Left colon (tissue), 2 donors: ENCODE measurements at regions of chr17 and their contacts with region 1.

Region 1: DNA sequence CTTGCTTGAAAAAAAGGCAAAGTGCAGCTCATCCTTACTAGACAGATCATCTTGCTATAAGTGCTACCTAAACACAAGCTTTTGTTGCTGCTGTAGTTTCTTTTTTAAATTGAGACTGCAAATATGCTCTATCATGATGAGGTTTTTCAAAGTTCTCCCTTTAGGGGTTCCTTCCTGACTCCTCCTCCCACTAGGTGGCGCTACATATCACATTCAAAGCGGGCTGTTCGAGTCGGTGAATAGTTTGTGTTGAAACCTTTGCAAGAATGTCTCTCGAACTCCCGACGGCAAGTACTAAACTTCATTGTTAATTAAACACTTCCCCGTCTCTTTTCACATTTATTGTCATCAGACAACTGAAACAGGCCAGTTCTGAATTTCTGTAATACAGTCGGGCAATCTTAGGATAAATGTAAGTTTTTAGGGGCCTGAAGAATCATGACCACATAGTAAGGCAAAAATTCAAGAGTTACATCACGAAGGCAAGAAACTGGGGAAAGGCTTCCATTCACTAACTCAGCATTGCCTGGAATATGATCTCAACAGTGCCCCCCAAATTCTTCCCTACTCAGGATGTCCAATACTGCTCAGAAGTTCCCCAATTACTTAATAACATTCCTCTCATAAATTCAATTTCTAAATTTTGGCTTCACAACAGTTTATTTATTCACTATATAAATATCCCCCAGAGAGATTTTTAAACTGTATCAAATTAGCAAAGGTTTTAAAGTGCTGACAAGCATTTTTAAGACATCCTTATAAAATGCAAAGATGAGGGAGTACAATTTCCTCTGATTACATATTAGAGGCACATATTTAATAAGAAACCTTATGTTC is 6.7 kb downstream of the HS3ST3A1 start:
- DNase-seq: peak; percentile 49 to 74
- ATAC-seq: peak; percentile 64

Region 2: DNA sequence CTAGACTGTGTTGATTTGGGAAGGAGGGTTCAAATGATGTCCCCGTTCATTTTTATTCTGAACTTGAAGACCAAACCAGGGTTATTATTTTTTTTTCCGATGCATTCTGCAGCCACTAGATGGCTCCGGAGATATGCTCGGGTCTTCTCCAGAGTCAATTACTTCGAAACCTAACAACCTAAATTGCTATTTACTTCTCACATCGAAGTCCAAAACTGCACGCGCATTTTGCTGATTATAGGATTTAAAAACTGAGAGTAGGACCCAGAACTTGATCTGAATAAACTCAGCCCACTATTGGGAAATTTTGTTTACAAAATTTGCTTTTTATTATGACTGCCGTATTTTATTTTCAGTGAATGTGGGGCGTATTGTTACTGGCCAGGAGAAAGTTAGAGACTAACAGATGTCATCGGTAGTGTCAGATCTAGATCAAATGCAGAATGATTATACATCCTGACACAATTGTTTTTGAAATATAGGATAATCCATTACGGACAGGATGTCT is 257.1 kb before region 1 on chr17:
- intact Hi-C with region 1: loop called in 1 of 2 experiments (anchors 10 kb)
- DNase-seq: peak in 1 of 2 donors; percentile 15
- ATAC-seq: peak; percentile 66

Region 3: DNA sequence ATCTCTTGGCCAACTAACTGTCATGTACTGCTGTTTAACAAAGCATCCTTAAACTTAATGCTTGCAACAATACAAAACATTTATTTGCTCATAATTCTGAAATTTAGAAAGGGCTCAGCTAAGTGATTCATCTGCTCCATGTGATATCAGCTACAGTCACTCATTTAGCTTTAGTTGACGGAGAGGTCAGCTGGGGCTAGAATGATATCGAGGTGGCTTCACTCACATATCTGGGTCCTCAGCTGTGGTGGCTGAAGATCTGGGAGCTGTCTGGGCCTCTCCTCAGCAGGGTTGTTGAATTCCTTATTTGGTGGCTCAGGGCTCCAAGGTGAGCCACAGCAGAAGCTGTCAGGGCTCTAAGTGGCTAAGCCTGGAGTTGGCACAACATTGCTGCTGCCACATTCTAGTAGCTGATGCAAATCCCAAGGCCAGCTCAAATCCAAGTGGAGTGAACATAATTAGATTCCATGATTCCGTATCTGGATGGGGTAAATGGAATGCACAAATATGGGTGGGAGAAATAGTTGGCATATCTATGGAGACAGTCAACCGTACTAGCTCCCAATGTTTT is 56.1 kb before region 1 on chr17:
- intact Hi-C with region 1: loop called in 1 of 2 experiments (anchors 10 kb)
- DNase-seq: no peak
- ATAC-seq: no peak

Region 4: DNA sequence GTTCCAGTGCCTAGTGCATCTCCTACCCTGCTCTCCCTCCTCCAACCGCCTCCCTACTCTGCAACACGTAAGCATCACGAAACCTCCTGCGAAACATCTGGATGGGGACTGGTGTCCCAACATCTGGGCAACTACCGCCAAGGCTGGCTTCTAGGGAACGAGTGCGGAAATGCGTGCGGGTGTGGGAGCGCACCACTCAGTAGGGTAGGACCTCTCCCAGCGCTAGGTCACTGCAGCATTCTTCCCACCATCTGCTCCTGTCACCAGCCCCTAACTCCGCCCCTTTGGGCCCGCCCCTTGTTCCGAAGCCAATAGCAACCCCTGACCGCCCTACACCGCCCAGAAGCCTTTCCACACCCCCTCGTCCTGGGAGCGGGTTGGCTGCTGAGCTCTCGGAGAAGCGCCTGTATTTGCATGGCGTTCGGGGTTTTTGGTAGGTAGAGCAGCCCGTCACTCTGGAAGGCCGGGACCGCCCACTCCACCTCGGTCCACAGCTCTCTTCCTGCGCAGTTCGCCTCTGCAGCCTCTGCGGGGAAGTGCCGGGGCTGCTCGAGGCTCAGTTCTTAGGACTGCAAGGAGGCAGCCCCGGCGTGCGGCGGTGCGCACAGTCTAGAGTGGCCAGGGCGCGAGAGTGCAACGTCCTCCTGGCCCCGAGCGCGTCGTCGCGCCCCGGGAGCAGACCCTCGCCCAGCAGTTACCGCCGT is 705.7 kb after region 1 on chr17 and contains the start of gene HS3ST3B1:
- intact Hi-C with region 1: loop called in 1 of 2 experiments (anchors 5 kb)
- DNase-seq: peak; percentile 98 to 99
- ATAC-seq: peak; percentile 87
- total RNA-seq, gene HS3ST3B1: 0.73 to 1.7 TPM

Region 5: DNA sequence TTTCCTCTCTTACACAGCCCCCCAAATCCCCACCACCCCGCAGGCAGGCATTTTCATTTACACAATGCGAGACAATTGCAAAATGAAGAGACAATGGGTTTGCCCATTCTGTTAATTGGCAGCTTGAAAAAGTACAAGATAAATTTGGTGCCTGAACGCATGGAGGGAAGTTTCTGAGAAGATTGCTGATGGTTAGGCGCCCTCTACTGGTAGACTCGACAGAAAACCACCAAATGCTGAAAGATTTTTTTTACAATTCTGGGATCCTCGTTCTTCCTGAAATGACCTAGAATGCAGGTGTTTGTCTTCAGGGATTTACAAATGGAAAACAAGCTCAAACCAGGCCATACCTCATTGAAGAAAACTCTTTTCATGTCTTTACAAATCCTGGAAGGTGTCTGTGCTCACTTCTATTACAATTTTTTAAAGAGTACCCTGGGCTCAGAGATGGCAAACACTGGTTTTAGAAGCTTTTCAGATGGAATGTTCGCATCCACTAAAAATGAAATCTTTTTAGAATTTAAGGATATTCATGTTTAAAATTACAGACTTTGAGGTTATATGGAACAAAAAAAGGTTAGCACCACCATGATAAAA is 1331.6 kb after region 1 on chr17:
- intact Hi-C with region 1: loop called in 1 of 2 experiments (anchors 10 kb)
- DNase-seq: peak; percentile 27 to 38
- ATAC-seq: no peak

Region 6: DNA sequence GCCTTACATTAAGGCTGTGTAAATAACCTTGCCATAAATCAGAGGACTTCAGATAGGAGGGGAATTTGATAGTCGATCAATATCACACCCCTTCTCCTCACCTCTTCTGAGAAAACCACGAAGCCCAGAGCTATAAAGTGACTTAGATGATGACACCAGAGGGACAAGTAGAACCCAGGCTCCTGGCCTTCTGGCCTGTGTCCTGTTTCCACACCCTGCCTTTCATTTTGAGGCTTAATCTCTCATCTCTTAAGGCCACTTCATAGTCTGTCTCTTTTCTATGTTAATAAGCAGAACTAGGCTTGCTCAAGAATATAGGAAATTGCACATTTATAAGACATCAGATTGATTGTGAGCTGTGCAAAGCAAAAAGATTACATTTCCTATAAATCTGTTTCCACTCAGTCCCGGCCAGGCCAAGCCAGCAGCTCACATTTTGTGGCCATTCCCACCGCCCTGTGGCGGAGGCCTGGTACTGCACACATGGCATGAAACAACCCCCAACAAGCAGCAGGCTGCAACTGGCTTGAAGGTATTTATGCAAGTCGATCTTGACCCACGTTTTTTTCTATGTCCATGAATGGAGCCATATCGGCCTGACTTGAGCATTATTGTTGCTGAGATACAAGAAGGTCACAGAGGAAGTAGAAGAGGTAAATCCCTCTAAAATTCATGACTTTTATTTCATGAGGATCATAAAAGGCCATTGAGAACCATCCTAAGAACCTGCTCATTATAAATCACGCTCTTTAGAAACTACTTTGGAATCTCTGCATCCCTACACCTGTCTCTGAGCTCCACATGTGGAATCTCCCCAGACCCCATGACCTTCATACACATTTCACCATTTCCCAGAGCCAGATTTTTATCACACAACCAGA is 1576.4 kb after region 1 on chr17:
- intact Hi-C with region 1: loop called in 1 of 2 experiments (anchors 10 kb)
- DNase-seq: peak in 1 of 2 donors; percentile 53
- ATAC-seq: peak; percentile 80